Caco-2 (cell line): ENCODE measurements at regions of chr1 and their contacts with region 1.

Region 1: GRCh38 chr1:110495926-110496600 is 22.9 kb downstream of the KCNA10 start:
- DNase-seq: peak; percentile 64 to 80
- H3K4me3 ChIP-seq: no peak overlapping the region
- H3K4me3 Mint-ChIP-seq: no peak overlapping the region
- H3K27ac Mint-ChIP-seq: no peak overlapping the region
- H3K4me1 ChIP-seq: 0 out of 2 replicates have a peak, but pooled peaks cover 4% of the 10 kb centered on the region
- H3K4me1 Mint-ChIP-seq: no peaks in the 10 kb centered on the region
- H3K27me3 ChIP-seq: no peaks in the 10 kb centered on the region
- H3K27me3 Mint-ChIP-seq: no peaks in the 10 kb centered on the region
- CTCF ChIP-seq: peak; percentile 72 to 74

Region 2: DNA sequence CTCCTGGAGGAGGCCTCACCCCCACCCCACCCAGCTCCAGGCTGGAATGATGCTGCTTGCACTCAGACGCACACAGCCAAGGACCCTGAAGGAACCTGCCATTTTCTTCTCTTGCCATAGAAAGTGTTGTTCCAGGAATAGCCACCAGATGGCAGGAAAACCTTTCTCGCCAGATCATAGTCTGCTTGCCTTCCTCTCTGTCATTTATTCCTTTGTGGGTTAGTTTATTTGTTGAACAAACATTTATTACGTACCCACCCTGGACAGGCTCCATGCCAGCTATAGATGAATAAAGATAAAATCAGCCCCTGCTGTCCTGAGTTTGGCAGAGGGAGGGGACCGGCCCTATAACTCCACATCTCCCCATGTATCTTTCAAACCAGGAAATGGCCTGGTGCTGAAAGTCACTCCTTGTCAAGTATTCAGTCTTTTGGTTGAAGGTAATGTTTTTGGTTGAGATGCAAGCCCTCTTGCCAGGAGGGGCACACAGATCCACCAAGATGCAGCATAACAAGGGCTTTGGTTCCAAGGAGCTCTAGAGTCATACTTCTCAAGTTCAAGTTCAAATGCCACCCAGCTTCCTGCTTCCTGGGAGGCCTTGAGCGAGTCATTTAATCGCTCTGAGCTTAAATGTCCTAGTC is 292.9 kb before region 1 on chr1:
- CTCF ChIA-PET with region 1: interaction called, 21 read pairs
- POLR2A ChIA-PET with region 1: no interaction called
- intact Hi-C with region 1: loop called (anchors 2 kb)
- DNase-seq: peak; percentile 43 to 66
- H3K4me3 ChIP-seq: no peak overlapping the region
- H3K4me3 Mint-ChIP-seq: no peak overlapping the region
- H3K27ac Mint-ChIP-seq: no peak overlapping the region
- H3K4me1 ChIP-seq: no peaks in the 10 kb centered on the region
- H3K4me1 Mint-ChIP-seq: no peaks in the 10 kb centered on the region
- H3K27me3 ChIP-seq: no peaks in the 10 kb centered on the region
- H3K27me3 Mint-ChIP-seq: no peaks in the 10 kb centered on the region
- CTCF ChIP-seq: peak; percentile 53 to 59

Region 3: DNA sequence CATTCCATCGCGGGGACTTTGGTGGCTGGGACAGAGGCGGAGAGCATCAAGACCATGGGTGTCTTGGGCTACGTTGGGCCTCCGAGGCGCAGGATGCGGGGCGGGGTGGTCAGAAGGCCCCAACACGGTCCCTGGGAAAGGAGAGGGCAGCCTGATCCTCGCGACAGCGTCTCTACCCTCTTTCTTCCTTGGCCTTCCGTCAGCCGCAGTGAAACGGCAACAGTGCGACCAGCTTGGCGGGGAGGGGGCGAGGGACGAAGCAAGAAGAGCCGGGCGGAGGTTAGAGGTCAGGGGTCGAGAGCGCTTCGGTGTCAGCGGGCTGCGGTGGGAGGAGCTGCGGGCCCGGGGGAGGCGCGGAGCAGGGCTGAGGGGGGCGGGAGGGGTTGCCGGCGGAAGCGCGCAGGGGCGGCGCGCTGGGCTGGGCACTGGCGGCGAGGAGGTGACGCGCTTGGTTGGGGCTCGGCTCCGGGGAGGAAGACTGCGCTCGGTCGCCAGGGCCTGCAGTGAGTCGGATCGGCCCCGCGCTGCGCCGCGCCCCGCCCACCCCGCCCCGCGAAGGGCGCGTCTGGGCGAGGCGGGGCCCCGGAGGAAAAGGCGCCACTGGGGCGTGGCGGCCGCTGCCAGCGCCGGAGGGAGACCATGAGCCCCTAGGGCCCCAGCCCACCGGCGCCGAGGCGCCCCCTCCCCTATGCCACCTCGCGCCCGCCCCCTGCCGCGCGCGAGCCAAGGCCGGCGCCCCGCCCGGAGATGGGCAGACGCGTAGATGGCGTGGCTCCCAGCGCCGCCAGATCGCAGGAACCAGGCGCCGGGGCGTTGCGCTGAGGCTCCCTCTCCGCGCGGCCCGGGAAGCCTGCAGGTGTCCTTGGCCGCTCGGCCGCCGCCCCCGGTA is 286.1 kb before region 1 on chr1 and contains the start of gene KCNC4:
- CTCF ChIA-PET with region 1: interaction called, 21 read pairs
- POLR2A ChIA-PET with region 1: no interaction called
- intact Hi-C with region 1: no loop called
- DNase-seq: peak; percentile 74
- H3K4me3 ChIP-seq: peak within 1 kb of the TSS; percentile 51
- H3K4me3 Mint-ChIP-seq: peak within 1 kb of the TSS; percentile 85
- H3K27ac Mint-ChIP-seq: no peak within 1 kb of the TSS
- H3K4me1 ChIP-seq: peaks cover 4% of the 10 kb centered on the region; the same call in 1 of the 2 replicates
- H3K4me1 Mint-ChIP-seq: no peaks in the 10 kb centered on the region
- H3K27me3 ChIP-seq: no peaks in the 10 kb centered on the region
- H3K27me3 Mint-ChIP-seq: no peaks in the 10 kb centered on the region
- CTCF ChIP-seq: no peak
- total RNA-seq, gene KCNC4: 5.3 TPM in 2 replicates

Region 4: DNA sequence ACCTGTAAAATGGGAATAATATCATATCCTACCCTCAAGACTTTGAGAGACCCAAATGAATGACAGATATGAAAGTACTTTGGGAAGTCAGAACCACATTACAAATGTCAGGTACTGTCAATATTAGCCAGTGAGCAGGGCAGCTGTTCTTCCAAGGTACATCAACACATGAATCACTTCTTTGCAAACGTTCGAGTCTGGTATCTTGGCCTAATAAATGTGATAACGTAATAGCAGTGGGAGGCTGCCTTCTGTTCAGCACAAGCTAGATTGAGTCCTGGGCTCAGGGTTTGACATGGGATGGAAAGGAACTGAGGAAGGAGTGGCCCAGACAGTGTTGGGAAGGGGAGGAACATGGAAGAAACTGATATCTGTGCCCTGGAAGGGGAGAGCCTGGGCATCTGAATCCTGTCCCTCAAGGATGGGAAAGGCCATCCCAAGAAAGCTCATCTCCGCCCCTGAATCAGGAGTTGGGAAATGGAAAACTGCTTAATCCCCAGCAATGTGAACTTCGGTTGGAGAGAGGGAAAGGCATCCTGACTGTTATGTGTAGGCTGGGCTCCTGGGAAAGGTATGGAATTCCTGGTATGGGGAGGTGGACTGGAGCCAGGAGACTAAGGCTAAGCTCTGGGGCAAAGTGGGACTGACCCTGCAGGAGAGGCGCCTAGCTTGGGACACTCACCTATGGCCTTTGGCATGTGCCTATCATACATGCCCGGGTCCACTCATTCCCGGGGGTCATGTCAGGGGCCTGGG is 271.6 kb before region 1 on chr1:
- CTCF ChIA-PET with region 1: no interaction called
- POLR2A ChIA-PET with region 1: no interaction called
- intact Hi-C with region 1: no loop called
- DNase-seq: peak; percentile 5 to 58
- H3K4me3 ChIP-seq: no peak overlapping the region
- H3K4me3 Mint-ChIP-seq: no peak overlapping the region
- H3K27ac Mint-ChIP-seq: no peak overlapping the region
- H3K4me1 ChIP-seq: peaks cover 16% of the 10 kb centered on the region
- H3K4me1 Mint-ChIP-seq: peaks cover 12% of the 10 kb centered on the region
- H3K27me3 ChIP-seq: no peaks in the 10 kb centered on the region
- H3K27me3 Mint-ChIP-seq: no peaks in the 10 kb centered on the region
- CTCF ChIP-seq: no peak

Region 5: DNA sequence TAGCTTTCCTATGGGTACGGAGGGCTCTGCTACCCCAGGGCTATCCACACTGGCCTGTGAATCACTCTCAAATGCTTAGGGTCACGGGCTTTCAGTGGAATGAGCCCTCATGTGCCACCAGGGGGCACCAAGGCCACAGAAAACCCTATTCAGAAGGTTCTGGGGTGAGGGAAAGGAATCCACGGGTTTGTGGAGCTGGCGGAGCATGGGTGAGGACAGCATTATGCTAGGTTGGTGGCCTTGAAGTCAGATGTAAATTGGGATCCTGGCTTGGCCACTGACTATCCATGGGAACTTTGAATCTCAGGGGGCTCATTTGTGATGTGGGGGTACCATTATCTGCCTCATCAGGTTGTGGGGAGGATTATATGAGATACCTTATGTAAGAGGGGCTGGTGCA is 83.5 kb before region 1 on chr1:
- CTCF ChIA-PET with region 1: interaction called, 36 read pairs
- POLR2A ChIA-PET with region 1: no interaction called
- intact Hi-C with region 1: loop called (anchors 1 kb)
- DNase-seq: peak; percentile 65 to 74
- H3K4me3 ChIP-seq: no peak overlapping the region
- H3K4me3 Mint-ChIP-seq: no peak overlapping the region
- H3K27ac Mint-ChIP-seq: no peak overlapping the region
- H3K4me1 ChIP-seq: peaks cover 7% of the 10 kb centered on the region; the same call in 1 of the 2 replicates
- H3K4me1 Mint-ChIP-seq: peaks cover 7% of the 10 kb centered on the region
- H3K27me3 ChIP-seq: no peaks in the 10 kb centered on the region
- H3K27me3 Mint-ChIP-seq: no peaks in the 10 kb centered on the region
- CTCF ChIP-seq: peak; percentile 65 to 75

Region 6: DNA sequence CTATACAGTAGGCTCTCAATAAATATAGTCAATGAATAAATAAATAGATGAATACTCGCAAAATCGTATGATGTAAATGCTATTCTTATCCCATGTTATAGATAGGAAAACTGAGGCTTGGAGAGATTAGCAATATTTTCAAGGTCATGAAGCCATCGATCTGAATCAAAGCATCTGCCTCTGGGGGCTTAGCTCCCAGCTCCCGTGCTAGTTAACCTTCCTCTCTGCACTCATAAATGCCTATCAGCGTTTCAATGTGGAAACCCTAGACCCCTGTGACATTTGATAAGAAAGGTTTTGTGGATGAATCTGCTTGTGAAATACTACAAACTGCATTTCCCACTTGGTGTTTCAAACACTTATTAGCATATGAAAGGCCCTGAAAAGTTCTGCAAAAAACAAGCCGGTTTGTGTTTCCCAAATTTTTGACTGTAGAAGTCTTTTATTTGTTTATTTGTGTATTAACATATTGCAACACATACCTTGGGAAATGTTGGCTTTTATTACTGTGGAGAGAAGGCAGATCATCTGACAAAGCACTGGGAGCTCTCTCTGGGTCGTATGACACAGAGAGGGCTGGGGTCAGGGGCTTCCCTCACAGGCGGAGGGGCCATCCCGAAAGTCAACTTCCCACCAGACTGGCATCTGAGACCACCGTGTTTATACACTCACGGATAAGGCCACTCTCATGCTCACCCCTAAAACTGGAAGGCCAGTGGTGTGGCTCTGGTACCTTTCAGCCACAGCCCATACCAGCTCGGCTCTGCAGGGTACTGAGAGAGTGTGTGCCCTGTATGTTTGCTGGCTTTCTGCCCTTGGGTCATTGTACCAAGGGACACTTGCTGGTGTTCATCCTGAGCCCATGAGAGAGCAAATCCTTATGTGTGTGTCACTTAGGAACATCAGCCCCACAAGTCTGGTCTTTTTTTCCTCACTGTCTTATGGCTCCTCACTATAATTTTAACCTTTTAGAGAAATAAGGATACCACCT is 46.1 kb before region 1 on chr1:
- CTCF ChIA-PET with region 1: no interaction called
- POLR2A ChIA-PET with region 1: no interaction called
- intact Hi-C with region 1: no loop called
- DNase-seq: no peak
- H3K4me3 ChIP-seq: no peak overlapping the region
- H3K4me3 Mint-ChIP-seq: no peak overlapping the region
- H3K27ac Mint-ChIP-seq: no peak overlapping the region
- H3K4me1 ChIP-seq: no peaks in the 10 kb centered on the region
- H3K4me1 Mint-ChIP-seq: no peaks in the 10 kb centered on the region
- H3K27me3 ChIP-seq: no peaks in the 10 kb centered on the region
- H3K27me3 Mint-ChIP-seq: peaks cover 2% of the 10 kb centered on the region
- CTCF ChIP-seq: no peak

Region 7: GRCh38 chr1:110477041-110477440 is 19.0 kb before region 1 on chr1:
- CTCF ChIA-PET with region 1: interaction called, 26 read pairs
- POLR2A ChIA-PET with region 1: no interaction called
- intact Hi-C with region 1: loop called (anchors 1 kb)
- DNase-seq: peak in 1 of 2 experiments; percentile 26
- H3K4me3 ChIP-seq: no peak overlapping the region
- H3K4me3 Mint-ChIP-seq: peak overlapping the region; percentile 27
- H3K27ac Mint-ChIP-seq: peak overlapping the region; percentile 89
- H3K4me1 ChIP-seq: peaks cover 57% of the 10 kb centered on the region
- H3K4me1 Mint-ChIP-seq: peaks cover 35% of the 10 kb centered on the region
- H3K27me3 ChIP-seq: no peaks in the 10 kb centered on the region
- H3K27me3 Mint-ChIP-seq: no peaks in the 10 kb centered on the region
- CTCF ChIP-seq: no peak

Region 8: GRCh38 chr1:110482662-110483307 is 13.3 kb before region 1 on chr1:
- CTCF ChIA-PET with region 1: interaction called, 26 read pairs
- POLR2A ChIA-PET with region 1: no interaction called
- intact Hi-C with region 1: loop called (anchors 1 kb)
- DNase-seq: no peak
- H3K4me3 ChIP-seq: no peak overlapping the region
- H3K4me3 Mint-ChIP-seq: peak overlapping the region; percentile 68
- H3K27ac Mint-ChIP-seq: peak overlapping the region; percentile 57
- H3K4me1 ChIP-seq: peaks cover 34% of the 10 kb centered on the region
- H3K4me1 Mint-ChIP-seq: peaks cover 19% of the 10 kb centered on the region
- H3K27me3 ChIP-seq: no peaks in the 10 kb centered on the region
- H3K27me3 Mint-ChIP-seq: no peaks in the 10 kb centered on the region
- CTCF ChIP-seq: no peak